PC-9 (cell line): ENCODE measurements at regions of chr20 and their contacts with region 1.

Region 1: GRCh38 chr20:1301031-1301529 is 27.9 kb downstream of the SDCBP2 start:
- DNase-seq: peak; percentile 64 to 74
- H3K4me3 ChIP-seq: no peak overlapping the region
- H3K27ac ChIP-seq: peak overlapping the region; percentile 32; the same call in 1 of the 2 replicates
- H3K4me1 ChIP-seq: peaks cover 11% of the 10 kb centered on the region
- H3K27me3 ChIP-seq: no peaks in the 10 kb centered on the region
- CTCF ChIP-seq: no peak

Region 2: DNA sequence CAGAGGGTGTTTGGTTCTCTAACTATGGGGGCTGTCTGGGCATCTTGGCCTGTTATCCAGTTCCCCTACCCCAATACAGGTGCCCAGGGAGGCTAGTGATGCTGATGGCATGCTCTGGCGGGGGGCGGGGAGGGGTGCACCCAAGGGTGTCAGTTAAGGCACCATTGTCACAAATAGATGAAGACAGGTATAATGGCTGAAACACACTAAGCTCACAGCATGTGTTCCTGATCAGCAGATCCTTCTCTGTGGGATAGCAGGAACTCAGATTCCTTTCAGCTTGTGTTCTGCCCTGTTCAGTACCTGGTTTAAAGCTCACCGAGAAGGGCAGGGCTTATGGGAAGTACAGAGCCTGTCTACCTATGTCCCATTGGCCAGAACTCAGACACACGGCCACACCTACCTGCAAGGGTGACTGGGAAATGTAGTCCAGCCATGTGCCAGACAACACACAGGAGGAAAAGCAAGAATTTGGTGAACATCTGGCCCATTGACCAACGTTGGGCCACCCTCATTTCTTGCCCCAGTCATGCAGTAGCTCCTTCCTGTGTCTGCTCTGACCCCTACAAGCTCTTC is 295.5 kb before region 1 on chr20:
- CTCF ChIA-PET with region 1: no interaction called
- POLR2A ChIA-PET with region 1: no interaction called
- intact Hi-C with region 1: no loop called
- DNase-seq: peak in 1 of 2 experiments; percentile 15
- H3K4me3 ChIP-seq: no peak overlapping the region
- H3K27ac ChIP-seq: no peak overlapping the region
- H3K4me1 ChIP-seq: no peaks in the 10 kb centered on the region
- H3K27me3 ChIP-seq: peaks cover 40% of the 10 kb centered on the region; the same call in 1 of the 2 replicates
- CTCF ChIP-seq: no peak

Region 3: DNA sequence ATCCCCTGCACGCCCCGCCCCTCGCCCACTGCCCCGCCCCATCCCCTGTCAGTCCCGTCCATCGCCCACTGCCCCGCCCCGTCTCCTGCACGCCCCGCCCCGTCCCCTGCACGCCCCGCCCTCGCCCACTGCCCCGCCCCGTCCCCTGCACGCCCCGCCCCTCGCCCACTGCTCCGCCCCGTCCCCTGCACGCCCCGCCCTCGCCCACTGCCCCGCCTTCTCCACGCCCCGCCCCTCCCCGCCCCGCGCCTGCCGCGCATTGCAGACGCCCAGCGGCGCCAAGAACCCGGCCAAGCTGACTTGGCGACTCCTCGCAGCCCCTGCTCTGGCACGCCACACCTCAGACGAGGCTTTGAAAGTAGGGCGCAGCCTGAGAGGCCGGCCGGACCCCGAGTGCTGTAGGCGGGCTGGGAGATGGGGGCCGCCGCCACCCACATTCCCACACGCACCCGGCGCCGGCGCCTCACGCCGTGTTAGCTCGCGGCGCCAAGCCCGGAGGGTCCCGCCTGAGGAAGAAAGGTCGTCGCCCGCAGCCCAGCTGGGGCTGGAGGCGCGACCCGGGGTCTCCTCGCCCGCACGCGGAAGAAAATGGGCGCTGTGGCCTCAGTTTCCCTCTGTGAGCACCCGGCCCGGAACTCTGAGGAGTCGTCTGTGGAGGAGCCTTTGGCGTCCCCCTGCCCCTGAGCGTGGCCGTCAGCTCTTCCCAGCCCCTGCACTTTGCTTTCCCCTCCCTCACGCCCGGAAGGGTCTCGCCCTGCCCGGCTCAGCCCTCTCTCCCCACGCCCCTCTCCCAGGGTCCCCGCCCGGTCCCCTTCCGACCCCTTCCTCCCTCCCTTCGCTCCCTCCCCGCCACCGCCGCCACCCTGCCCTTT is 75.1 kb before region 1 on chr20 and contains the start of gene RAD21L1:
- CTCF ChIA-PET with region 1: no interaction called
- POLR2A ChIA-PET with region 1: no interaction called
- intact Hi-C with region 1: no loop called
- DNase-seq: peak in 1 of 2 experiments; percentile 73
- H3K4me3 ChIP-seq: peak within 1 kb of the TSS; percentile 91
- H3K27ac ChIP-seq: no peak within 1 kb of the TSS
- H3K4me1 ChIP-seq: 0 out of 2 replicates have a peak, but pooled peaks cover 3% of the 10 kb centered on the region
- H3K27me3 ChIP-seq: peaks cover 28% of the 10 kb centered on the region
- CTCF ChIP-seq: no peak
- total RNA-seq, gene RAD21L1: 0.60 TPM in 1 of 2 replicates, not detected in the other

Region 4: GRCh38 chr20:1266167-1266973 is 34.7 kb before region 1 on chr20 and contains the start of gene SNPH:
- CTCF ChIA-PET with region 1: no interaction called
- POLR2A ChIA-PET with region 1: interaction called, 16 read pairs
- intact Hi-C with region 1: no loop called
- DNase-seq: peak in 1 of 2 experiments; percentile 66
- H3K4me3 ChIP-seq: peak within 1 kb of the TSS; percentile 69
- H3K27ac ChIP-seq: no peak within 1 kb of the TSS
- H3K4me1 ChIP-seq: peaks cover 4% of the 10 kb centered on the region; the same call in 1 of the 2 replicates
- H3K27me3 ChIP-seq: no peaks in the 10 kb centered on the region
- CTCF ChIP-seq: no peak
- total RNA-seq, gene SNPH: 3.4 and 4.0 TPM in 2 replicates

Region 5: GRCh38 chr20:1513801-1514200 is 212.7 kb after region 1 on chr20:
- CTCF ChIA-PET with region 1: no interaction called
- POLR2A ChIA-PET with region 1: no interaction called
- intact Hi-C with region 1: no loop called
- DNase-seq: no peak
- H3K4me3 ChIP-seq: no peak overlapping the region
- H3K27ac ChIP-seq: no peak overlapping the region
- H3K4me1 ChIP-seq: no peaks in the 10 kb centered on the region
- H3K27me3 ChIP-seq: no peaks in the 10 kb centered on the region
- CTCF ChIP-seq: no peak